ENCODE measurements at regions of chr17 and their contacts with region 1.

Region 1: GRCh38 chr17:57537524-57538410 is 207.3 kb downstream of the CCDC182 start:
- DNase-seq: peak; percentile 36 to 76 (median 63)
- H3K4me3 ChIP-seq: peak overlapping the region in 2 of 7 experiments; percentile 17 to 56
- H3K27ac ChIP-seq: peak overlapping the region; percentile 48 to 71
- H3K4me1 ChIP-seq: peaks cover 10 to 70% (median 32%) of the 10 kb centered on the region in 4 experiments
- H3K27me3 ChIP-seq: no peaks in the 10 kb centered on the region

Region 2: GRCh38 chr17:57552114-57552624 is 14.4 kb after region 1 on chr17:
- CTCF ChIA-PET with region 1: interaction called, 10 read pairs
- POLR2A ChIA-PET with region 1: no interaction called
- DNase-seq: peak in 2 of 3 donors; percentile 39 to 43
- H3K4me3 ChIP-seq: peak overlapping the region in 2 of 7 experiments; percentile 22 to 34
- H3K27ac ChIP-seq: peak overlapping the region in 1 of 2 experiments; percentile 59
- H3K4me1 ChIP-seq: peaks cover 33 to 98% (median 86%) of the 10 kb centered on the region in 4 experiments
- H3K27me3 ChIP-seq: no peaks in the 10 kb centered on the region

Region 3: GRCh38 chr17:57570724-57571344 is 33.1 kb after region 1 on chr17:
- CTCF ChIA-PET with region 1: no interaction called
- POLR2A ChIA-PET with region 1: no interaction called
- DNase-seq: no peak
- H3K4me3 ChIP-seq: no peak overlapping the region
- H3K27ac ChIP-seq: no peak overlapping the region
- H3K4me1 ChIP-seq: peaks cover 0 to 11% (median 0%) of the 10 kb centered on the region in 4 experiments
- H3K27me3 ChIP-seq: no peaks in the 10 kb centered on the region